Esophagus muscularis mucosa (tissue), 4 donors: ENCODE measurements at regions of chr12 and their contacts with region 1.

Region 1: GRCh38 chr12:94545935-94546771 is 86.5 kb upstream of the CEP83 start:
- DNase-seq: no peak
- H3K4me3 ChIP-seq: no peak overlapping the region
- H3K27ac ChIP-seq: no peak overlapping the region
- H3K4me1 ChIP-seq: peaks cover 0 to 5% (median 0%) of the 10 kb centered on the region in 4 donors
- H3K27me3 ChIP-seq: no peaks in the 10 kb centered on the region
- CTCF ChIP-seq: peak; percentile 80 to 84 (median 81)
- EP300 ChIP-seq: no peak
- POLR2A ChIP-seq: no peak

Region 2: DNA sequence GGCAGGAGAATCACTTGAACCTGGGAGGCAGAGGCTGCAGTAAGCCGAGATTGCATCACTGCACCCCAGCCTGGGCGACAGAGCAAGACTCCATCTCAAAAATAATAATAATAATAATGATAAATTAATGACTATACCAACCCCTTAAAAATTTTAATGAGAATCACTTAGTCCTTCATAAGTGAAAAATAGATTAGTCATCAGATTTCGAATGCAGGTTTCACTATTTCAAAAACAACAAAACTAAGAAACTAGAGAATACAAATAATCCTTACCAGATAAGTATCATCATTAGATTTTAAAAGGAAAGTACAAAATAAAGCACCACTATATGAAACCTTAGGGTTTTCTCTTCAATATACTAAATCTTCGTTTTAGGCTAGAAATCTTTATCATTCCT is 148.8 kb before region 1 on chr12:
- intact Hi-C with region 1: no loop called
- DNase-seq: no peak
- H3K4me3 ChIP-seq: no peak overlapping the region
- H3K27ac ChIP-seq: no peak overlapping the region
- H3K4me1 ChIP-seq: no peaks in the 10 kb centered on the region
- H3K27me3 ChIP-seq: no peaks in the 10 kb centered on the region
- CTCF ChIP-seq: no peak
- EP300 ChIP-seq: no peak
- POLR2A ChIP-seq: no peak

Region 3: GRCh38 chr12:94762259-94762942 is 216.2 kb after region 1 on chr12:
- intact Hi-C with region 1: loop called (anchors 10 kb)
- DNase-seq: no peak
- H3K4me3 ChIP-seq: no peak overlapping the region
- H3K27ac ChIP-seq: no peak overlapping the region
- H3K4me1 ChIP-seq: peaks cover 0 to 31% (median 11%) of the 10 kb centered on the region in 4 donors
- H3K27me3 ChIP-seq: no peaks in the 10 kb centered on the region
- CTCF ChIP-seq: no peak
- EP300 ChIP-seq: no peak
- POLR2A ChIP-seq: no peak

Region 4: DNA sequence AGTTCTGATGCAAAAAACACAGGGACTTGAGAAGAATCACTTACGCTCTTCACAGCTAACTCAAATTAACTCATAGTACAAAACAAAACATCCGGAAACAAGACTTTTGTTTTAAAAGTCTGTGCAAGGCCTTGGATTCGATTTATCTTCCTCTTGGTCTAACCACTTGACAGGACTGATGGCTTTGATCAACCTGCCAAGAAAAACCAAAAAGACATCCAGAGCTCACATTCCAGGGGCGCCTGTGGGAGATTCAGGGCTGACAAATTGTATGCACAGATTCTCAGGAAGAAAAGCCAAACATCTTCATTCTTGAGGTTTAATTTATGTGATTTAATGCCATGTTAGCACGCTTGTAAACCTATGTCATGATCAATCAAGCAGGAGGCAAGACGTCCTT is 233.3 kb after region 1 on chr12:
- intact Hi-C with region 1: no loop called
- DNase-seq: no peak
- H3K4me3 ChIP-seq: no peak overlapping the region
- H3K27ac ChIP-seq: no peak overlapping the region
- H3K4me1 ChIP-seq: peaks cover 0 to 27% (median 14%) of the 10 kb centered on the region in 4 donors
- H3K27me3 ChIP-seq: no peaks in the 10 kb centered on the region
- CTCF ChIP-seq: no peak
- EP300 ChIP-seq: no peak
- POLR2A ChIP-seq: no peak

Region 5: GRCh38 chr12:94875525-94875924 is 329.4 kb after region 1 on chr12:
- intact Hi-C with region 1: loop called (anchors 5 kb)
- DNase-seq: peak; percentile 50
- H3K4me3 ChIP-seq: no peak overlapping the region
- H3K27ac ChIP-seq: peak overlapping the region in 3 of 4 donors; percentile 80 to 84 (median 82)
- H3K4me1 ChIP-seq: peaks cover 19 to 48% (median 44%) of the 10 kb centered on the region in 4 donors
- H3K27me3 ChIP-seq: peaks cover 0 to 15% (median 0%) of the 10 kb centered on the region in 4 donors
- CTCF ChIP-seq: peak; percentile 48 to 55 (median 49)
- EP300 ChIP-seq: no peak
- POLR2A ChIP-seq: no peak

Region 6: GRCh38 chr12:94980577-94980976 is 434.4 kb after region 1 on chr12:
- intact Hi-C with region 1: loop called (anchors 5 kb)
- DNase-seq: no peak
- H3K4me3 ChIP-seq: no peak overlapping the region
- H3K27ac ChIP-seq: no peak overlapping the region
- H3K4me1 ChIP-seq: peaks cover 0 to 14% (median 0%) of the 10 kb centered on the region in 4 donors
- H3K27me3 ChIP-seq: no peaks in the 10 kb centered on the region
- CTCF ChIP-seq: peak in 2 of 3 experiments; percentile 22 to 35
- EP300 ChIP-seq: no peak
- POLR2A ChIP-seq: no peak